AG04449 (cell line): ENCODE measurements at regions of chr19 and their contacts with region 1.

Region 1: DNA sequence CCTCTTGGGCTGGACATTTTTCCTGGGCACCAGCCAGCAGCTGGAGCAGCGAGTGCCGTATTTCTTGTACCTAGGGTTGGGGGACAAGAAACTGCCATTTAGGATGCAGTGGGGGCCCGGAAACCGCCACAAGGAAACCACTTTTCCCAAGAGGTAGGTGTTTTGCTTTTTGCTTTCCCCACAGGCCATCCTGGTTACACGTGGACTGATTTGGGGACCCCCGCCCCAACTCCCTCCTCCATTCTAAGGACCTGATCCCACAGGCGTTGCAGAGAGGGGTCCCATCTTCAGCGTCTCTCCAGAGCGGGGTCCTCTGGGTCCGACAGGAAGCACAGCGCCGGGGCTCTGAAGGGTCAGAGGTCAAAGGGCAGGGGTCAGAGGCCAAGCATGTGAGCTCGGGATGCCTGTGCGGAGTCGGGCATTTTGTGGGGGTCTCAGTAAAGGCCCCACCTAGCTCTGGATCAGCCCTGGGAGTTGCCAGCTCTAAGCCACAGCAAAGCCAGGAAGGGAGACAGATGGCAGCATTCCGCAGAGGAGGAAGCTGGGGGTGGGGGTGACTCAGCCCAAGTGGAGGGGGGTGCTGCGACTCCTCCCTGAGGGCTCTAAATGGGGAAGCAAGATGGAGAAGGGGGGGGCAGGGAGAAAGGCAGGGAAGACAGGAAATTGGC is 4.3 kb downstream of the ZGLP1 start:
- DNase-seq: no peak
- H3K4me3 ChIP-seq: no peak overlapping the region
- CTCF ChIP-seq: no peak

Region 2: GRCh38 chr19:10315335-10316214 is 10.3 kb after region 1 on chr19 and contains the start of gene FDX2:
- CTCF ChIA-PET with region 1: interaction called, 10 read pairs
- POLR2A ChIA-PET with region 1: interaction called, 3 read pairs
- DNase-seq: no peak
- H3K4me3 ChIP-seq: peak within 1 kb of the TSS; percentile 80
- CTCF ChIP-seq: no peak